Activated B cell treated with CpG ODN at 0.5 μM for 24 hours (primary cell): ENCODE measurements at regions of chr19 and their contacts with region 1.

Region 1: DNA sequence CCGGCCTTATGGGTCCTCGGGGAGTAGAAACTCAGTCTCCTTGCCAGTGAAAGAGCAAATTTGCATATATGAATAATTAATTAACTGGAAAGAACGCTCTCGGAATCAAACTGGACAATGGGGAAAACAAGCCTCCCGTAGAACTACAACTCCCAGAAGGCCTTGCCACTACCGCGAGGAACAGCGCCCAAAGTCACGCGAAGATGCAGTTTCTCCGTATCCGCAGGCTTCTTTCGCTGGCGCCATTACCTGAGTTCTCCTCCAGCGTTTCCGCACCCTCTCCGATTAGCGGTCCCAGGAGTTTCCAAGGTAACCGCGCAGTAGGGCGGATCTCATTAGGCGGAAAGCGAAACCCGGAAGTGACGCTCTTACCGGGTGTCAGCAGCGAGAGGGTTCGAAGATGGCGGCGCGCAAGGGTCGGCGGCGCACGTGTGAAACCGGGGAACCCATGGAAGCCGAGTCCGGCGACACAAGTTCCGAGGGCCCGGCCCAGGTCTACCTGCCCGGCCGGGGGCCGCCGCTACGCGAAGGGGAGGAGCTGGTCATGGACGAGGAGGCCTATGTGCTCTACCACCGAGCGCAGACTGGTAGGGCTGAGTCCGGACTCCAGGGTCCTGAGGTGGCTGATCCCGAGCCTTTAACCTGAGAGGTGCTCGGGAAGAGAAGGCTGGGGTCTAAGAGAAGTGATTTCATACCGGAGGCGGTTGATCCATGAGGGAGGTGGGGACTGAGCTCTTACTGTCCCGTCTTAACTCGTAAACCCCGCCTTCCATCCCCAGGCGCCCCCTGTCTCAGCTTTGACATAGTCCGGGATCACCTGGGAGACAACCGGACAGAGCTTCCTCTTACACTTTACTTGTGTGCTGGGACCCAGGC is at the start of gene GRWD1:
- DNase-seq: peak; percentile 78
- ATAC-seq: peak; percentile 89
- H3K4me3 Mint-ChIP-seq: peak within 1 kb of the TSS; percentile 96
- H3K27ac Mint-ChIP-seq: peak within 1 kb of the TSS; percentile 95
- H3K4me1 Mint-ChIP-seq: peaks cover 35% of the 10 kb centered on the region
- H3K27me3 Mint-ChIP-seq: peaks cover 19% of the 10 kb centered on the region
- CTCF ChIP-seq: no peak
- total RNA-seq, gene GRWD1: 63.4 and 71.4 TPM in 2 replicates

Region 2: DNA sequence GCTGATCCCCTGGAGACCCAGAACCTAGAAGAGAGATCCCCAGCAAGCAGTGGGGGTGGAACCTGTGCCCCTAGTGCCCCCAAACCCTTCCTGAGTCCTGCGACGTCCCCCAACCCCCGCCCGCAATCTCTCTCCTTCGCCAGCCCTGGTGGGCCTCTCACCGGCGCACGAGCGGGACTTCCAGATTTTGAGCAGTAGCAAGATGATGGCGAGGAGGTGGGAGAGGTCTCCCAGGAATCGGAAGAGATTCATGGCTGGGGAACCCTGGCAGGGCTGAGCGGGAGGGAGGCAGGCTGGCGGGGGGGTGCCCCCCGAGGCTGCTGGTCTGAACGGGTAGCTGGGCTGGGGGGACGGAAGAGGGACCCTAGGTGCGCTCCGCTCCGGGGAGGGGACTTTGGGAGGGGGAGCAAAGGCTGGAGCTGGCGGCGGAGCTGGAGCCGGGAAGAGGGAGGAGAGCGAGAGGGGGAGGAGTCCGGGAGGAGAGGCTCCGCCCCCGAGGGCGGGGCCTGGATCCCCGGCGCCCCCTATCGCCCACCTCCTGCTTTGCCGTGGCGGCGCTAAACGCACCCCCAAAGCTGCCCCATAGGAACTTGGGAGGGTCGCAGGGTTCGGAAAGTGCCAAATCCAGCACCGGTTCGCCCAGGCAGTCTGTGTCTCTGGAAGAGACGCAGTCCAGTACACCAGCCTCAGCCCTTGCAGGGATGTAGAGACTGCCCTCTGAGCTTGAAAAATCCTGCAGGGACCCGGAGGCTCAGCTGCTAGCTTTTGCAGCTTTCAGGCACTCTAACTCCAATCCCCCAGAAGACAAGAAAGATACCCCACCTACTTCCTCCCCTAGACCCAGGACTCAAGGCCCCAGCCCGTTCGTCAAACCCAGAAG is 54.5 kb before region 1 on chr19 and contains the start of gene KDELR1:
- CTCF ChIA-PET with region 1: interaction called, 3 read pairs
- POLR2A ChIA-PET with region 1: interaction called, 5 read pairs
- intact Hi-C with region 1: loop called (anchors 1 kb)
- DNase-seq: peak; percentile 83
- ATAC-seq: peak; percentile 84
- H3K4me3 Mint-ChIP-seq: peak within 1 kb of the TSS; percentile 96
- H3K27ac Mint-ChIP-seq: peak within 1 kb of the TSS; percentile 88
- H3K4me1 Mint-ChIP-seq: peaks cover 35% of the 10 kb centered on the region
- H3K27me3 Mint-ChIP-seq: peaks cover 19% of the 10 kb centered on the region
- CTCF ChIP-seq: peak; percentile 51
- total RNA-seq, gene KDELR1: 50.8 and 51.9 TPM in 2 replicates

Region 3: GRCh38 chr19:48403606-48404005 is 42.2 kb before region 1 on chr19:
- CTCF ChIA-PET with region 1: no interaction called
- POLR2A ChIA-PET with region 1: no interaction called
- intact Hi-C with region 1: loop called (anchors 1 kb)
- DNase-seq: no peak
- ATAC-seq: peak; percentile 62
- H3K4me3 Mint-ChIP-seq: no peak overlapping the region
- H3K27ac Mint-ChIP-seq: no peak overlapping the region
- H3K4me1 Mint-ChIP-seq: peaks cover 19% of the 10 kb centered on the region
- H3K27me3 Mint-ChIP-seq: peaks cover 18% of the 10 kb centered on the region
- CTCF ChIP-seq: no peak

Region 4: DNA sequence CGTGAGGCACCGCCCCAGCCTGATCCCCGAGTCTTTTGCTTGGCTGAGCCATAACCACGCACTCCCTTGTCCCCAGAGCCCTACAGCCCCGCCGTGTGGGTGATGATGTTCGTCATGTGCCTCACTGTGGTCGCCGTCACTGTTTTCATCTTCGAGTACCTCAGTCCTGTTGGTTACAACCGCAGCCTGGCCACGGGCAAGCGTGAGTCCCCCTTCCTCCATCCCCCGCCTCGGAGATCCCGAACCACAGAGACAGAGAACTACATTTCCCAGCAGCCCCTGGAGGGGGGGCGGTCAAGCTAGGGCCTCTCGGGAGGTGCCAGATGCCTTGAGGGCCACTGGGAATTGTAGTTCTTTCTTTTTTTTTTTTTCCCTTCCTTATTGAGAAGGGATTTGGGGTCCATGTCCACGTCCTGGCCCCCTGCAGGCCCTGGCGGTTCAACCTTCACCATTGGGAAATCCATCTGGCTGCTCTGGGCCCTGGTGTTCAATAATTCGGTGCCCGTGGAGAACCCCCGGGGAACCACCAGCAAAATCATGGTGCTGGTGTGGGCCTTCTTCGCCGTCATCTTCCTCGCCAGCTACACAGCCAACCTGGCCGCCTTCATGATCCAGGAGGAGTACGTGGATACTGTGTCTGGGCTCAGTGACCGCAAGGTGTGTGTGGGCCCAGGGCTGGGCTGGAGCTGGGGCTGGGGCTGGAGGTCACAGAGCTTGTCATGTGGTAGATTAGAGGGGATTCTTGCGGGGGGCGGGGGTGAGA is 26.5 kb before region 1 on chr19:
- CTCF ChIA-PET with region 1: no interaction called
- POLR2A ChIA-PET with region 1: no interaction called
- intact Hi-C with region 1: loop called (anchors 1 kb)
- DNase-seq: peak; percentile 61
- ATAC-seq: peak; percentile 87
- H3K4me3 Mint-ChIP-seq: peak overlapping the region; percentile 84
- H3K27ac Mint-ChIP-seq: peak overlapping the region; percentile 56
- H3K4me1 Mint-ChIP-seq: peaks cover 18% of the 10 kb centered on the region
- H3K27me3 Mint-ChIP-seq: peaks cover 26% of the 10 kb centered on the region
- CTCF ChIP-seq: no peak

Region 5: GRCh38 chr19:48468775-48469288 is 23.0 kb after region 1 on chr19:
- CTCF ChIA-PET with region 1: no interaction called
- POLR2A ChIA-PET with region 1: interaction called, 4 read pairs
- intact Hi-C with region 1: loop called (anchors 1 kb)
- DNase-seq: peak; percentile 95
- ATAC-seq: peak; percentile 88
- H3K4me3 Mint-ChIP-seq: peak overlapping the region; percentile 90
- H3K27ac Mint-ChIP-seq: peak overlapping the region; percentile 94
- H3K4me1 Mint-ChIP-seq: peaks cover 27% of the 10 kb centered on the region
- H3K27me3 Mint-ChIP-seq: no peaks in the 10 kb centered on the region
- CTCF ChIP-seq: no peak

Region 6: GRCh38 chr19:48492925-48493717 is 47.3 kb after region 1 on chr19:
- CTCF ChIA-PET with region 1: interaction called, 4 read pairs
- POLR2A ChIA-PET with region 1: interaction called, 5 read pairs
- intact Hi-C with region 1: loop called (anchors 1 kb)
- DNase-seq: peak; percentile 71
- ATAC-seq: peak; percentile 69
- H3K4me3 Mint-ChIP-seq: peak overlapping the region; percentile 74
- H3K27ac Mint-ChIP-seq: no peak overlapping the region
- H3K4me1 Mint-ChIP-seq: peaks cover 42% of the 10 kb centered on the region
- H3K27me3 Mint-ChIP-seq: peaks cover 33% of the 10 kb centered on the region
- CTCF ChIP-seq: no peak

Region 7: DNA sequence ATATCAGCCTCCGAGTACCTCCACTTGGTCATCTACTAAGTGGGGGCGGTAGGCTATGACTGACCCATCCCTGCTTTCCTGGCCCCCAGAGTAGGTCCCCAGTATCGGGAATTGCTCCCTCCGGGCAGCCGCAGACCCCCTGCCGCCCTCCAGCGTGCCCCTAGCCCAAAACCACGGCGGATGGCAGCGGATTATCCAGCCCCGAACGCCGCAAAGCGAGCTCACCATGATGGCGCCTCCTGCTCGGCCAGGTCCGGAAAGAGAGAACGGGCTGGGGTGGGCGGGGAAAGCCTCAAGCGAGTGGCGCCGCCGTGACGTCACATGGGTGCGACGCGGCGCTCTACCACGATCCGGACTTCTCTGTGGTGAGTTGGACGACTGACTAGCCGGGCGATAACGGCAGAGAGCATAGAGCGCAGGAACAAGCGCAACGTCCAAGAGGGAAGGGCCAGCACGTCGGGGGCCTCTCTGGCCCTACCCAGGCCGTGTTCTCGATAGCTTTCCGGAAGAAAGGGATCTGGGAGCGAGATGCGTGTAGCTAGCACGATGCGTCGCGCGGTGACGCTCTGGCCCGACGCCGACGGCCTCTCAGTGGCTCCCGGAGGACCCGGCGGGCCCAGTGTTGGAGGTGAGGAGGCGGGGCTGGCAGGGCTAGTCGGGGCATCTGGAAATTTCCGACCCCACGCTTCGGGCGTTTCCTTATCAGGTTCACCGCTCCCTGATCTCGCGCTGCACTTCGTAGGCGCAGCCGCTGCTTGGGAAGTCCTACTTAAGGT is 173.3 kb after region 1 on chr19 and contains the starts of genes RPL18 and SPHK2:
- CTCF ChIA-PET with region 1: interaction called, 3 read pairs
- POLR2A ChIA-PET with region 1: no interaction called
- intact Hi-C with region 1: loop called (anchors 1 kb)
- DNase-seq: peak; percentile 93
- ATAC-seq: peak; percentile 81
- H3K4me3 Mint-ChIP-seq: peak within 1 kb of the TSS; percentile 98
- H3K27ac Mint-ChIP-seq: peak within 1 kb of the TSS; percentile 97
- H3K4me1 Mint-ChIP-seq: peaks cover 56% of the 10 kb centered on the region
- H3K27me3 Mint-ChIP-seq: no peaks in the 10 kb centered on the region
- CTCF ChIP-seq: no peak
- total RNA-seq, gene RPL18: 2,427 and 2,762 TPM in 2 replicates
- total RNA-seq, gene SPHK2: 38.2 and 48.5 TPM in 2 replicates